ENCODE measurements at regions of chr12 and their contacts with region 1.

Region 1: DNA sequence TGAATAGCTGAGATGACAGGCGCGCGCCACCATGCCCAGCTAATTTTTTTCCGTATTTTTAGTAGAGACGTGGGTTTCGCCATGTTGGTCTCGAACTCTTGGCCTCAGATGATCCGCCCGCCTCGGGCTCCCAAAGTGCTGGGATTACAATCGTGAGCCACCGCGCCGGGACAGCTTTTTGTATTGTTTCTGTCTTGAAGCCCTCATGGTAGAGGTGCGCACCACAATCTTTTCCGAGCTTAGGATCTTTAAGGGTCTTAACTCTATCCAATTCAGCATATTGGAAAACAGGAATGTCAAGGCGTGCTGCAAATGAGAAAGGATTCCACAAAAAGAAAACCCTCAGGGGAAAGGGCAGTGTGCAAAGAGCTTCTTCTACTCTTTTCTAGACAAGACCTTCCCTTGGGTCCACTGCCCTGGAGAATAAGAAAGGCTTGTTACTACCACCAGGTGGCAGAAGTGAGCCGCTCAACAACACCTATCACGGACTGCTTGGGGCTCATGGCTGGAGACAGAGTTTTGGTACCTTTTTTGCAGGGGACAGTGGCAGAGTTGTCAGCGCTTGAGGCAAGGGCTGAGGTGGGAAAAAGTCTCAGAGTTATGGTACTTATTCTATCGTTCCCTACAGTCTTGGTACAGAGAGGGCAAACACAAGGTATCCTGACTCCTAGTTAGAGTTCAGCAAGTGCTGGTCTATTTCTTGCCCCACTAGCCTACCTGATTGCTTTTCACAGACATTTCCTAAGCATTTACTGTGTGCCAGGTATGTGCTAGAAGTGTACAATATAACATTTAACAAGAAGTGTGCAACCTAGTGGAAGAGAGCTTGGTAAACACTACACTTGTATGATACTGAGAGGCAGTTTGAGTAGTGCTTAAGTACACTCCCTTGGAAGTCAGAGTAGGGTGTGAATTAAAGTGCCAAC is 16.4 kb upstream of the SP7 start:
- DNase-seq: peak; percentile 88 to 95 (median 90)
- H3K4me3 ChIP-seq: no peak overlapping the region
- H3K27ac ChIP-seq: no peak overlapping the region
- H3K4me1 ChIP-seq: peaks cover 1 to 8% (median 4%) of the 10 kb centered on the region in 4 experiments
- H3K27me3 ChIP-seq: no peaks in the 10 kb centered on the region

Region 2: DNA sequence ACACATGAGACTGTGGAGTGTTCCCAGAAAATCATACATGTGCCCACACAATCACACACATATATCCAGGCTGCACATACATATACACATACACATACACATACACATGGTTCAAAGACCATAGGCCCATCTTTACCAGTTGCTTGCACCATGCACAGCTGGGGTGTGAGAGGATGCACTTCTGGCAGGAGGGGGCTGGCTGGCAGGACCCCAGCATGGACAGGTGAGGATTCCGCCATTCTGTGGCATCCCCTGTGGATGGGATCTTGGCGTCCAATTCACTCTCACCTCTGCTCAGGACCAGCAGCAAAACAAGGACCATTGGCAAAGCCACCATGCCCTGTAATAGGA is 152.5 kb before region 1 on chr12:
- CTCF ChIA-PET with region 1: no interaction called
- POLR2A ChIA-PET with region 1: no interaction called
- DNase-seq: no peak
- H3K4me3 ChIP-seq: no peak overlapping the region
- H3K27ac ChIP-seq: no peak overlapping the region
- H3K4me1 ChIP-seq: peaks cover 9 to 44% (median 39%) of the 10 kb centered on the region in 4 experiments
- H3K27me3 ChIP-seq: no peaks in the 10 kb centered on the region

Region 3: GRCh38 chr12:53379389-53380103 is 27.0 kb after region 1 on chr12:
- CTCF ChIA-PET with region 1: interaction called, 102 read pairs
- POLR2A ChIA-PET with region 1: interaction called, 6 read pairs
- DNase-seq: peak; percentile 100
- H3K4me3 ChIP-seq: peak overlapping the region; percentile 6 to 89 (median 70)
- H3K27ac ChIP-seq: peak overlapping the region; percentile 62 to 91
- H3K4me1 ChIP-seq: peaks cover 15 to 42% (median 37%) of the 10 kb centered on the region in 4 experiments
- H3K27me3 ChIP-seq: no peaks in the 10 kb centered on the region

Region 4: GRCh38 chr12:53414756-53415417 is 62.3 kb after region 1 on chr12:
- CTCF ChIA-PET with region 1: interaction called, 138 read pairs
- POLR2A ChIA-PET with region 1: interaction called, 3 read pairs
- DNase-seq: no peak
- H3K4me3 ChIP-seq: no peak overlapping the region
- H3K27ac ChIP-seq: peak overlapping the region in 1 of 2 experiments; percentile 3
- H3K4me1 ChIP-seq: peaks cover 0 to 48% (median 31%) of the 10 kb centered on the region in 4 experiments
- H3K27me3 ChIP-seq: no peaks in the 10 kb centered on the region

Region 5: GRCh38 chr12:53424626-53425514 is 72.3 kb after region 1 on chr12:
- CTCF ChIA-PET with region 1: interaction called, 138 read pairs
- POLR2A ChIA-PET with region 1: interaction called, 3 read pairs
- DNase-seq: peak in 1 of 3 donors; percentile 18
- H3K4me3 ChIP-seq: no peak overlapping the region
- H3K27ac ChIP-seq: peak overlapping the region in 1 of 2 experiments; percentile 60
- H3K4me1 ChIP-seq: peaks cover 0 to 12% (median 6%) of the 10 kb centered on the region in 4 experiments
- H3K27me3 ChIP-seq: no peaks in the 10 kb centered on the region

Region 6: GRCh38 chr12:53508534-53509199 is 156.1 kb after region 1 on chr12:
- CTCF ChIA-PET with region 1: interaction called, 23 read pairs
- POLR2A ChIA-PET with region 1: no interaction called
- DNase-seq: peak; percentile 67 to 75 (median 72)
- H3K4me3 ChIP-seq: peak overlapping the region in 1 of 7 experiments; percentile 21
- H3K27ac ChIP-seq: no peak overlapping the region
- H3K4me1 ChIP-seq: peaks cover 0 to 11% (median 6%) of the 10 kb centered on the region in 4 experiments
- H3K27me3 ChIP-seq: no peaks in the 10 kb centered on the region